Thyroid gland (tissue), 4 donors: ENCODE measurements at regions of chr14 and their contacts with region 1.

Region 1: GRCh38 chr14:64478634-64479250 is 13.4 kb downstream of the AKAP5 start:
- DNase-seq: no peak
- H3K4me3 ChIP-seq: no peak overlapping the region
- H3K27ac ChIP-seq: no peak overlapping the region
- H3K4me1 ChIP-seq: peaks cover 0 to 9% of the 10 kb centered on the region in 2 donors
- H3K27me3 ChIP-seq: no peaks in the 10 kb centered on the region
- CTCF ChIP-seq: peak in 4 of 6 experiments; percentile 7 to 66 (median 51)
- POLR2A ChIP-seq: no peak

Region 2: DNA sequence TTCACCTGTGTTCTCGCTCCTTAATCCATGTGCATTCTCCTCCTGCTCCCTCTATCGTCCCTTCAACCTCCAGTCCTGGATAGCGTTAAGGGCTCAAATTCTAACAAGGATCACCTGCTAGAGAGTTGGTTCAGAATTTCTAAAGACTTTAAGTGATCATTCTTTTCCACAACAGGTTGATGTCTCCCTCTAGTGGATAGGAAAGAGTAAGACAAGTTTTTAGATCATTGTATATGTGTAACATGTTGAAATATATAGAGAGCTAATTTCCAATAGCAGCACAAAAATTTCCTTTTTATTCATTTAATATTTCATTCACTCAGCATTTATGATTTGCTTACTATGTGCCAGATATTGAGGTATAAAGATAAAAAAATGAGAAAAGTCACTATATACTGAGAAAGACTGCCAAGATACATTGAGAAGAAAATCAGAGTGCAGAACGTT is 175.2 kb before region 1 on chr14:
- intact Hi-C with region 1: no loop called
- DNase-seq: no peak
- H3K4me3 ChIP-seq: no peak overlapping the region
- H3K27ac ChIP-seq: no peak overlapping the region
- H3K4me1 ChIP-seq: no peaks in the 10 kb centered on the region
- H3K27me3 ChIP-seq: no peaks in the 10 kb centered on the region
- CTCF ChIP-seq: peak; percentile 45 to 90 (median 73)
- POLR2A ChIP-seq: no peak

Region 3: GRCh38 chr14:64340560-64341196 is 138.1 kb before region 1 on chr14:
- intact Hi-C with region 1: loop called (anchors 10 kb)
- DNase-seq: no peak
- H3K4me3 ChIP-seq: no peak overlapping the region
- H3K27ac ChIP-seq: no peak overlapping the region
- H3K4me1 ChIP-seq: peaks cover 0 to 3% of the 10 kb centered on the region in 2 donors
- H3K27me3 ChIP-seq: no peaks in the 10 kb centered on the region
- CTCF ChIP-seq: no peak
- POLR2A ChIP-seq: no peak

Region 4: DNA sequence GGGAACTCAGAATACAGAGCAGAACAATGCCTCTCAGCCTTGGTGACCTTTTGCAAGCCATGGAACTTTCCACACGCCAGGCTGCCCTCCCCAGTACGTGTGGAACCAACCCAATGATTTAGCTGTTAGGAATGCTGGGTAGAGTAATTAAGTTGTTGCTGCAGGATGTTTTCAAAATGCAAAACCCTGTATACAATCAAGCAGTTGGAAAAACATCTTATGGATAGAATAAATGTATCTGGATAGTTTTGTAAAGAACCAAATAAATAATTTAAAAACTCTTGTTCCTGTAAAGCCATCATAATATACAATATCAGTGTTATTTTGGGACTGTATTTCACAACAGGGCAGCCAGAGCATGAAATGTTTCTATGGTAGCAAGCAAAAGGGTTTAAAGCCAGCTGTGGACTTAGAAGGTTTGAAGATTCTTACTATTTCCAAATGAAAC is 90.5 kb after region 1 on chr14:
- intact Hi-C with region 1: no loop called
- DNase-seq: peak; percentile 40 to 41
- H3K4me3 ChIP-seq: no peak overlapping the region
- H3K27ac ChIP-seq: peak overlapping the region in 2 of 3 donors; percentile 30 to 46
- H3K4me1 ChIP-seq: peaks cover 0 to 20% of the 10 kb centered on the region in 2 donors
- H3K27me3 ChIP-seq: no peaks in the 10 kb centered on the region
- CTCF ChIP-seq: no peak
- POLR2A ChIP-seq: no peak